ENCODE measurements at regions of chr10 and their contacts with region 1.

Region 1: GRCh38 chr10:86936661-86937501 is 20.5 kb downstream of the MMRN2 start:
- DNase-seq: no peak
- H3K4me3 ChIP-seq: no peak overlapping the region
- H3K27ac ChIP-seq: no peak overlapping the region
- H3K4me1 ChIP-seq: peaks cover 11% of the 10 kb centered on the region
- H3K27me3 ChIP-seq: no peaks in the 10 kb centered on the region
- CTCF ChIP-seq: no peak

Region 2: GRCh38 chr10:87094373-87095235 is 157.7 kb after region 1 on chr10 and contains the starts of genes GLUD1 and SHLD2:
- CTCF ChIA-PET with region 1: interaction called, 26 read pairs
- POLR2A ChIA-PET with region 1: interaction called, 12 read pairs
- intact Hi-C with region 1: no loop called
- DNase-seq: peak; percentile 66 to 88
- H3K4me3 ChIP-seq: peak within 1 kb of the TSS; percentile 83
- H3K27ac ChIP-seq: peak within 1 kb of the TSS; percentile 80
- H3K4me1 ChIP-seq: peaks cover 38% of the 10 kb centered on the region
- H3K27me3 ChIP-seq: no peaks in the 10 kb centered on the region
- CTCF ChIP-seq: no peak
- total RNA-seq, gene GLUD1: 93.0 and 105 TPM in 2 replicates
- total RNA-seq, gene SHLD2: 11.3 and 15.9 TPM in 2 replicates